ENCODE measurements at regions of chr7 and their contacts with region 1.

Region 1: DNA sequence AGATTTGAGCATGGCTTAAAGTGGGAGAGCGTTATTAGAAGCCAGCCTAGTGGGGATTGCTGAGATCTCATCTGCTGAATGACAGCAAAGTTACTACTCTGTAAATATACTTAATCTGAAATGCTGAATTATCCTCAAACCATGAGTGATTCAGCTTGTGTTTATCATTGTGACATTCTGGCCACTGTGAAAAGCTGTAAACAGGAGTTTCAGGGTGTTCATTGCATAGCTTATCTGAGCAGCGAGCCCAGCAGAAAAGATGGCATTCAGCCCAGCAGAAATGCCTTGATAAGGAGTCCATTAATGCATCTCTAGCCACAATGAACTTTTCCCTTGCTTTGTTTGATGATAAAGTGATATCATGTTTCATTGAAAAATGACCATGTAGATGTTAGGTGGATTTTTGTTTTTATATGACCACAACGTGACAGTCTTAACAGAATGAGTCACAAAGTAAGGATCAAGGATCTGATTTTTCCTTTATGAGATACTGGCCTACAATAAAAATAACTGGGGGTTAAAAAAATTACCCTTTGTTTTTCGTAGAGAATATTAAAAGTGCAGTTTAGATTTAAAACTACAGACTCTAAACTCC is 7.8 kb downstream of the TES start:
- DNase-seq: peak; percentile 88 to 99
- H3K4me3 ChIP-seq: peak overlapping the region; percentile 36; the same call in 1 of the 2 replicates
- H3K27ac ChIP-seq: peak overlapping the region; percentile 88
- H3K4me1 ChIP-seq: peaks cover 73% of the 10 kb centered on the region
- H3K27me3 ChIP-seq: no peaks in the 10 kb centered on the region
- CTCF ChIP-seq: no peak

Region 2: DNA sequence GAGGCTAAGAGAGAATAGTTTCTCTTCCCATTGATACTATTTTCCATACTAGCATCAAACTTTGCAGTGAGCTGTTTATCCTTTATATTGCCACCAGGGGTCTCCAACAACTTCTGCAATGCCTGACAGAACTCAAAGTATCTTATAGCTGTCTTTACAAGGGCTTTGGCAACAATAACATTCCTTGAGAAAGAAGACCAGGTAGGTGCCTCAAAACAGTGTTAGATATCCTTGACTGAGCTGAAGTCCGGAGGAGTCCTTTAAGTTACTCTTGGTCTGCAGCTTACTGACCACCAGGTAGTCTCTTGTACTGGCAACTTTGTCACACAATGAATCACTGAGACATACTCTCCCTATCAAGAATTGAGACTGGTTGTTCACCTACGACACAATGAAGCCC is 37.8 kb before region 1 on chr7:
- CTCF ChIA-PET with region 1: interaction called, 3 read pairs
- POLR2A ChIA-PET with region 1: no interaction called
- intact Hi-C with region 1: loop called (anchors 1 kb)
- DNase-seq: peak; percentile 25 to 49
- H3K4me3 ChIP-seq: no peak overlapping the region
- H3K27ac ChIP-seq: no peak overlapping the region
- H3K4me1 ChIP-seq: peaks cover 11% of the 10 kb centered on the region; the same call in 1 of the 2 replicates
- H3K27me3 ChIP-seq: no peaks in the 10 kb centered on the region
- CTCF ChIP-seq: peak; percentile 89

Region 3: DNA sequence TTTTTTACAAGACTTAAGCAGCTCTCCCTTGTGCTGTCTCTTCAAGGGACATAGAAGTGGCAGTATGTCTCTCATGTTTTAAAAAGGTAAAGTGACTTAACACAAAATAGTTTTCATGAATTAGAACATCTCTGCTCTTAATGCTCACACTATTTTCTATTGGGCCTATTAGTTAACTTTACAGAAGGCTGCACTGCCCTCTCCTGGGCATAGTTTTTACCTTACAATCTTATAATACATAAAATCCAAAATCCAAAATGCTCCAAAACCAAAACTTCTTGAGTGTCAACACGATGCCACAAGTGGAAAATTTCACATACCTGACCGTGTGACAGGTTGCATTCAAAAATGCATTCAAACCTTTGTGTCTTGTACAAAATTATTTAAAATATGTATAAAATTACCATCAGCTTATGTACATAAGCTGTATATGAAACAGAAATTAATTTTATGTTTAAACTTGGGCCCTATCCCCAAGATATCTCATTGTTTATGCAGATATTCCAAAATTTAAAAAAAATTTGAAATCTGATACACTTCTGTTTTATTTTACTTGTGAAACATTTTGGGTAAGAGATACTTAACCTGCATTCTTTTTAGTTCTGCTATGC is 18.0 kb after region 1 on chr7:
- CTCF ChIA-PET with region 1: interaction called, 6 read pairs
- POLR2A ChIA-PET with region 1: interaction called, 4 read pairs
- intact Hi-C with region 1: loop called (anchors 2 kb)
- DNase-seq: no peak
- H3K4me3 ChIP-seq: no peak overlapping the region
- H3K27ac ChIP-seq: 0 out of 2 replicates have a peak overlapping the region, but pooled peaks have one; percentile 23
- H3K4me1 ChIP-seq: peaks cover 24% of the 10 kb centered on the region
- H3K27me3 ChIP-seq: no peaks in the 10 kb centered on the region
- CTCF ChIP-seq: peak; percentile 76

Region 4: GRCh38 chr7:116706668-116707126 is 488.5 kb after region 1 on chr7:
- CTCF ChIA-PET with region 1: no interaction called
- POLR2A ChIA-PET with region 1: no interaction called
- intact Hi-C with region 1: loop called (anchors 1 kb)
- DNase-seq: peak; percentile 71 to 80
- H3K4me3 ChIP-seq: peak overlapping the region; percentile 43; the same call in 1 of the 2 replicates
- H3K27ac ChIP-seq: peak overlapping the region; percentile 82
- H3K4me1 ChIP-seq: peaks cover 67% of the 10 kb centered on the region
- H3K27me3 ChIP-seq: no peaks in the 10 kb centered on the region
- CTCF ChIP-seq: no peak

Region 5: GRCh38 chr7:116911801-116912200 is 693.7 kb after region 1 on chr7:
- CTCF ChIA-PET with region 1: no interaction called
- POLR2A ChIA-PET with region 1: interaction called, 22 read pairs
- intact Hi-C with region 1: no loop called
- DNase-seq: no peak
- H3K4me3 ChIP-seq: no peak overlapping the region
- H3K27ac ChIP-seq: no peak overlapping the region
- H3K4me1 ChIP-seq: no peaks in the 10 kb centered on the region
- H3K27me3 ChIP-seq: no peaks in the 10 kb centered on the region
- CTCF ChIP-seq: no peak